Astrocyte of the cerebellum (primary cell): ENCODE measurements at regions of chr1 and their contacts with region 1.

Region 1: GRCh38 chr1:221187174-221187573 is 307.9 kb downstream of the HLX start:
- DNase-seq: no peak
- H3K4me3 ChIP-seq: no peak overlapping the region
- CTCF ChIP-seq: no peak

Region 2: DNA sequence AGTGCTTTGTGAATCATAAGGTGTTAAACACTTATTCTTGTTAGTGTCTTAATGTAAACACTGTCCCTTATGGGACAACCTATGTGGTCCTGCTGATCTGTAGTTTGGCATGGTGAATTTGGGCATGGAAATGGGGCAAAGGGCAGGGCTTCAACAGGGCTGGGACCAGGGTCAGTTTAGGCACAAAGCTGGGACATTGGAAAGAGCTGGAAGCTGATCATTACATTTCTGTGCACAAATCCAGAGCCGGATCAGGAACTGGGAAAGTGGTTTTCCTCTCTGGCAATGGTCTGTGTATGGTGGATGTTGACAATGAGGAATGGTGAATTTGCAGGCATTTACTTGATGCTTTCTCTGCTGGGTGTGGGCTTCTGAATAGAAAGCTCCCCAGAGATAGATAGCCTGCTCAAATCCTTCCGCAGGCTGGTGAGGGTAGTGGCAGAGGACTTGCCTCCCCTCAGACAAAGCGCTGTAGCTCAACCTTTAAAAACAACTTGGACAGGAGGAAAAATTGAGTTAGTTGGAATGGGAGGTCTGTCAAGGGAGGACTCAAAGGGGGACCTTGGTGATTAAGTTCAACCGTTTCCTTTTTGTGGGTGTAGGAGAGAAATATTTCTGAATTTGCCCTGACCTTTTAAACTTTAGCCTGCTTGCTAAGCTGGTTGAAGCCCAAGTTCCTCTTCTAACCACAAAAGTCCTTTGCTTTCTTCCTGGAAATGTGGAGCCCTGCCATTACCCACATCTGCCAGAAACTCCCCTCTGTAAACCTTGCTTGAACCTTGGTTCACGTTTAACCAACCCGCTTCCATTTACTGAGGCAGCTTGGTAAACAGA is 272.7 kb before region 1 on chr1:
- in situ Hi-C with region 1: loop called (anchors 10 kb)
- DNase-seq: no peak
- H3K4me3 ChIP-seq: no peak overlapping the region
- CTCF ChIP-seq: no peak

Region 3: DNA sequence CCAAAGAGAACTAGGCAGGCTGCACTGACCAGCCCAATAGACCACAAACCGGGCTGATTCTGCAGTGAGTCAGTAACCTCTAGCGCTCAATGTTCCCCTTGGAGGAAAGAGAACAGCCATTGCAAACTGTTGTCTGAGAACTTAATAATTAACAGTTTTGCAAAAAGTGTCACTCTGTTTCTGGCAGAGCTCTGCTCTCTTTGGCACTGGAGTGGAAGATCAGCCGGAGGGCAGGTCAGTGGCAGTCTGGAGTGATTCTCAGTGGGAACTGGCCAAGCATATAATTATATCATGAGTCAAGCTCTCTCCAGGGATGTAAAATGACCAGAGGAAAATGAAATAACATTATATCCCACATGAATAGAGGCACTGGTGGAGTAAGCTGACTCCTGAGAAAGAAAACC is 69.6 kb before region 1 on chr1:
- in situ Hi-C with region 1: loop called (anchors 5 kb)
- DNase-seq: peak; percentile 81
- H3K4me3 ChIP-seq: no peak overlapping the region
- CTCF ChIP-seq: no peak